ENCODE measurements at regions of chr5 and their contacts with region 1.

Region 1: GRCh38 chr5:149367249-149367971 is 9.6 kb downstream of the PCYOX1L start:
- DNase-seq: peak; percentile 70
- ATAC-seq: peak; percentile 72
- H3K4me3 Mint-ChIP-seq: no peak overlapping the region
- H3K27ac Mint-ChIP-seq: peak overlapping the region; percentile 40
- H3K4me1 Mint-ChIP-seq: peaks cover 11% of the 10 kb centered on the region
- H3K27me3 Mint-ChIP-seq: no peaks in the 10 kb centered on the region

Region 2: DNA sequence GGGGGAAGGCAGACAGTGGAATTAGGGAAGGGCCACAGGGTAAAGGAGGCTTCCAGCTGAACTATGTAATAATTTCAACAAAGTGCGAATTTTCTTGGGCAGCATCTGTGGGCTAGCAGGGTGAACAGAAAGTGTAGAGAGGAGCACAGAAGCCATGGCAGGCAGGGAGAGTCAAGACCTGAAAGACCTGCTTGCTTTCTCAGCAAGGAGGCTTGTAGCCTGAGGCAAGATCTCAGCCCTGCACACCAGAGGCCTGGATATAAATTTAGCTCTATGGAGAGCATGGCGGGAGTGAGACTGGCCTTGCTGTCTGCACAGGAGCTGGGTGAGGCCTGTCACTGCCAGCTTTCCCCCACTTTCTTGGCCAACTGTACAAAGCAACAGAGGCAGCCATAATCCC is 272.4 kb before region 1 on chr5:
- CTCF ChIA-PET with region 1: no interaction called
- POLR2A ChIA-PET with region 1: no interaction called
- DNase-seq: no peak
- ATAC-seq: no peak
- H3K4me3 Mint-ChIP-seq: no peak overlapping the region
- H3K27ac Mint-ChIP-seq: no peak overlapping the region
- H3K4me1 Mint-ChIP-seq: peaks cover 2% of the 10 kb centered on the region
- H3K27me3 Mint-ChIP-seq: peaks cover 2% of the 10 kb centered on the region

Region 3: DNA sequence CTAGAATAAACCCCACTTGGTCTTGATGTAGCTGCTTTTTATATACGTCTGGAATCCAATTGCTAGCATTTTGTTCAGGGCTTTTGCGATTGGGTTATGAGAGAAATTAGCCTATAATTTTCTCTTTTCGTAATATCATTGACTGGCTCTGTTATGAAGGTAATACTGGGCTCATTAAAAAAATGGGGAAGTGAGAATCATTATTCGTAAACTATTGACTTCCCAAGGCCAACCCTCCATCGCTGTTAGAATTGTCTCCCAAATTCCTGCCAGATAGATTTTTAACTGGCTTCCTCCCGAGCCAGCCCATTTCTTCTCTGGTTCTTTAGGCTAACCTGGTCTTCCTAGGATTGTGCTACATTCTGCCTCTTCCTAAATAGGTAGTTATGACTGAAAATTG is 58.1 kb before region 1 on chr5:
- CTCF ChIA-PET with region 1: interaction called, 94 read pairs
- POLR2A ChIA-PET with region 1: no interaction called
- DNase-seq: no peak
- ATAC-seq: no peak
- H3K4me3 Mint-ChIP-seq: no peak overlapping the region
- H3K27ac Mint-ChIP-seq: no peak overlapping the region
- H3K4me1 Mint-ChIP-seq: peaks cover 4% of the 10 kb centered on the region
- H3K27me3 Mint-ChIP-seq: no peaks in the 10 kb centered on the region

Region 4: GRCh38 chr5:149333711-149334443 is 33.5 kb before region 1 on chr5:
- CTCF ChIA-PET with region 1: interaction called, 20 read pairs
- POLR2A ChIA-PET with region 1: no interaction called
- DNase-seq: no peak
- ATAC-seq: no peak
- H3K4me3 Mint-ChIP-seq: no peak overlapping the region
- H3K27ac Mint-ChIP-seq: no peak overlapping the region
- H3K4me1 Mint-ChIP-seq: no peaks in the 10 kb centered on the region
- H3K27me3 Mint-ChIP-seq: peaks cover 4% of the 10 kb centered on the region

Region 5: GRCh38 chr5:149352169-149352568 is 15.2 kb before region 1 on chr5:
- CTCF ChIA-PET with region 1: interaction called, 81 read pairs
- POLR2A ChIA-PET with region 1: interaction called, 3 read pairs
- DNase-seq: no peak
- ATAC-seq: no peak
- H3K4me3 Mint-ChIP-seq: no peak overlapping the region
- H3K27ac Mint-ChIP-seq: peak overlapping the region; percentile 27
- H3K4me1 Mint-ChIP-seq: peaks cover 88% of the 10 kb centered on the region
- H3K27me3 Mint-ChIP-seq: no peaks in the 10 kb centered on the region

Region 6: DNA sequence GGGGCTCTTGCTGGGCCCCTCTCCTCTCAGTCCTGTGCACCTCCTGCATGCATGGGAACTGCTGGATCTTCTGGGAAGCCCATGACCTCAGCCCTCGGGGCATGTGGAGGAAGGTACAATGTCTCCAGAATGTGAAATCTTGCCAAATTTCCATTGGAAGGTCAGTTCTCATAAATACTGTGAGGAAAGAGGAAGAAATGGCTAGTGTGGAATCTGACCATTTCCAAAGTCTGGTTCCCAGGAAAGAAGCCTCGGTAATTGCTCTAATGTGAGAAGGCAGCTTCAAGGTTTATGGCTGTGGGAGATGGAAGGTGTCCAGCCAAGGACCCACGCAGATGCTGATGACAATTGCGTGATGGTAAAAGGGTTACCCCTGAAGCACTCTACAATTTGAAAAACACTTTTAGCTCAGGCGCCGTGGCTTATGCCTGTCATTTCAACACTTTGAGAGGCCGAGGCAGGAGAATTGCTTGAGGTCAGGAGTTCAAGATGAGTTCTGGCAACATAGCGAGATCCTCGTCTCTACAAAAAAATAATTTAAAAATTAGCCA is 19.7 kb after region 1 on chr5:
- CTCF ChIA-PET with region 1: interaction called, 15 read pairs
- POLR2A ChIA-PET with region 1: no interaction called
- DNase-seq: no peak
- ATAC-seq: no peak
- H3K4me3 Mint-ChIP-seq: no peak overlapping the region
- H3K27ac Mint-ChIP-seq: no peak overlapping the region
- H3K4me1 Mint-ChIP-seq: peaks cover 2% of the 10 kb centered on the region
- H3K27me3 Mint-ChIP-seq: peaks cover 5% of the 10 kb centered on the region

Region 7: GRCh38 chr5:149442563-149443182 is 75.3 kb after region 1 on chr5:
- CTCF ChIA-PET with region 1: interaction called, 10 read pairs
- POLR2A ChIA-PET with region 1: no interaction called
- DNase-seq: peak; percentile 76
- ATAC-seq: peak; percentile 82
- H3K4me3 Mint-ChIP-seq: no peak overlapping the region
- H3K27ac Mint-ChIP-seq: no peak overlapping the region
- H3K4me1 Mint-ChIP-seq: peaks cover 9% of the 10 kb centered on the region
- H3K27me3 Mint-ChIP-seq: no peaks in the 10 kb centered on the region

Region 8: DNA sequence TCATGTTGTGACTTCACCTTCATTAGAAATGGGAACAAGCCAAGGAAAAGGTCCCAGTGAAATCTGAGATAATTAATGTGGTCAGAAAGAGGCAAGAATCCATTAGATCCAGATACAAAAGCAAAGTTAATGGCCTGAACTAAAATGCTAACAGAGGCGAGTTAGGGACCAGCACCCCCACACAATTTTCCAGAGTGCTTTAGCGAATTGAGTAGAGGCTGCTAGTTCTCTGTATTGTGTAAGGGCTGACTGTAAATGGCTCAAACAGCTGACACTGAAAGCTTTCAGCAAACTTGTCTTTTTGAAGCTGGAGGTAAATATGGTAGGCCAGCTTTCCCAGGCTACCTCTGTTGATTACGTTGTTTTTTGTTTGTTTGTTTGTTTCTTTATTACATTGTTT is 108.4 kb after region 1 on chr5:
- CTCF ChIA-PET with region 1: no interaction called
- POLR2A ChIA-PET with region 1: no interaction called
- DNase-seq: no peak
- ATAC-seq: no peak
- H3K4me3 Mint-ChIP-seq: no peak overlapping the region
- H3K27ac Mint-ChIP-seq: no peak overlapping the region
- H3K4me1 Mint-ChIP-seq: no peaks in the 10 kb centered on the region
- H3K27me3 Mint-ChIP-seq: peaks cover 2% of the 10 kb centered on the region

Region 9: DNA sequence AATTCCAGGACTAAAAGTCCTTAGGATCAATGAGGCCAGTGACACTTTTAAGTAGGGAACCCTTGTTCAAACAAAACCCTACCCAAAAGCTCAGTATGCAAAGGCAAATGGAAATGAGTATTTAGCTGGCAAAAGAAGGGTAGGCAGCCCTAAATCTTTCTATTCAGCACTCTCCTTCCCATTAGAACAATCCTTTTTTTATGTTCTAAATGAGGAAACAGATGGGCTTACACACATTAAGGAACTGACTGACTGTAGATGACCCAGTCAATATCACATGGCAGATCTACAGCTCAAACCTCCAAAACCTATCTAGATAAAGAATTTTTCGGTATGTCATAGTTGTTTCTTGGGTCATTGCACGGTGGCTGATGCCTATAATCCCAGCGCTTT is 176.6 kb after region 1 on chr5:
- CTCF ChIA-PET with region 1: no interaction called
- POLR2A ChIA-PET with region 1: no interaction called
- DNase-seq: no peak
- ATAC-seq: no peak
- H3K4me3 Mint-ChIP-seq: no peak overlapping the region
- H3K27ac Mint-ChIP-seq: no peak overlapping the region
- H3K4me1 Mint-ChIP-seq: peaks cover 54% of the 10 kb centered on the region
- H3K27me3 Mint-ChIP-seq: no peaks in the 10 kb centered on the region

Region 10: DNA sequence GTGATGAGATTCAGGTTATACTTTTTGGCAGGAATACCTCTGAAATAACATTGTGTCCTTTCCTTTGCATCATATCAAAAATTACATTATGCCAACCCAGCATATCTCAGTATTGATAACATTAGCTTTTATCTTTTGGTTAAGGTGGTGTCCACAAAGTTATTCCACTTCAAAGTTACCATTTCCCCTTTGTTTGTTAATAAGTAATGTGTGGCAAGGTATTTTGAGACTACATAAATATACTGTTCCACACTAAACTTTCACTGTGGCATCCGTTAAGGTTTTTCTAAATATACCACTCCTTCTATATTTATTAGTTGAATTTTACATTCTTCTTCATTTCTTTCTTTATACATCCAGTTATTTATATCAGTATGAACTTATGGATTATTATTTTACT is 199.8 kb after region 1 on chr5:
- CTCF ChIA-PET with region 1: interaction called, 15 read pairs
- POLR2A ChIA-PET with region 1: no interaction called
- DNase-seq: no peak
- ATAC-seq: no peak
- H3K4me3 Mint-ChIP-seq: no peak overlapping the region
- H3K27ac Mint-ChIP-seq: no peak overlapping the region
- H3K4me1 Mint-ChIP-seq: peaks cover 7% of the 10 kb centered on the region
- H3K27me3 Mint-ChIP-seq: no peaks in the 10 kb centered on the region